ENCODE measurements at regions of chr4 and their contacts with region 1.

Region 1: GRCh38 chr4:139493176-139493575 is 39.3 kb downstream of the RAB33B start:
- DNase-seq: no peak
- ATAC-seq: no peak

Region 2: DNA sequence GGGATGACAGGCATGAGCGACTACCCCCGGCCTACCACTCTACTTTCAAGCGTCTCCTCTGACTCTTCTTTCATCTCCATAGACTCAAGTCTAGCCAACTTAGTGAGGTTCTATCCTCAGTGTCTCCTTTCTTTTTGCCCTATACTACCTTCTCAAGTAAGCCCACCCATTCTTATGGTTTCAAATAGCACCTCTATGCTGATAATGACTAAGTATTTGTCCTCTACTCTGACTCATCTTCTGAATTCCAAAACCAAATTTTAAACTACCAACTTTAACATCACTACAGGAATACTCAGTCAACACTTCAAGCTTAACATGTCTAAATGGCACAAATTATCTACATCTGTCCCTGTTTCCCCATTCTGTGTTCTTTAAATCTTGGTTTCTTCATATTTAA is 364.0 kb before region 1 on chr4:
- intact Hi-C with region 1: no loop called
- DNase-seq: no peak
- ATAC-seq: no peak

Region 3: GRCh38 chr4:139331185-139331584 is 162.0 kb before region 1 on chr4:
- intact Hi-C with region 1: no loop called
- DNase-seq: no peak
- ATAC-seq: no peak

Region 4: GRCh38 chr4:139633661-139634060 is 140.5 kb after region 1 on chr4:
- intact Hi-C with region 1: loop called in 1 of 2 experiments (anchors 10 kb)
- DNase-seq: peak in 1 of 2 donors; percentile 32
- ATAC-seq: peak; percentile 90

Region 5: GRCh38 chr4:139866276-139866962 is 373.2 kb after region 1 on chr4:
- intact Hi-C with region 1: no loop called
- DNase-seq: peak in 1 of 2 donors; percentile 29
- ATAC-seq: peak; percentile 69

Measured in left colon (tissue), 2 donors.